Activated T-helper 1 cell treated with anti-CD3 and anti-CD28 coated beads, Interleukin-12 subunit alpha, Interleukin-12 subunit beta, Interleukin-2, Interleukin-4 antibody, amounts not matched to agents 30 ng/mL and 10 ng/mL and 1 ng/mL, durations not matched to agents 14 hours and 24 hours and 36 hours (primary cell): ENCODE measurements at regions of chr15 and their contacts with region 1.

Region 1: GRCh38 chr15:34331809-34332208 is 5.8 kb downstream of the SLC12A6 start:
- DNase-seq: no peak
- H3K4me3 Mint-ChIP-seq: peak overlapping the region; percentile 23
- H3K27ac Mint-ChIP-seq: peak overlapping the region; percentile 78
- H3K4me1 Mint-ChIP-seq: peaks cover 87% of the 10 kb centered on the region
- H3K27me3 Mint-ChIP-seq: no peaks in the 10 kb centered on the region

Region 2: GRCh38 chr15:33086507-33087121 is 1245.2 kb before region 1 on chr15:
- intact Hi-C with region 1: no loop called
- DNase-seq: no peak
- H3K4me3 Mint-ChIP-seq: no peak overlapping the region
- H3K27ac Mint-ChIP-seq: no peak overlapping the region
- H3K4me1 Mint-ChIP-seq: no peaks in the 10 kb centered on the region
- H3K27me3 Mint-ChIP-seq: peaks cover 4% of the 10 kb centered on the region

Region 3: GRCh38 chr15:34241372-34242330 is 90.2 kb before region 1 on chr15:
- intact Hi-C with region 1: loop called (anchors 1 kb)
- DNase-seq: no peak
- H3K4me3 Mint-ChIP-seq: no peak overlapping the region
- H3K27ac Mint-ChIP-seq: no peak overlapping the region
- H3K4me1 Mint-ChIP-seq: peaks cover 38% of the 10 kb centered on the region
- H3K27me3 Mint-ChIP-seq: no peaks in the 10 kb centered on the region

Region 4: GRCh38 chr15:34275154-34275553 is 56.7 kb before region 1 on chr15:
- intact Hi-C with region 1: loop called (anchors 5 kb)
- DNase-seq: no peak
- H3K4me3 Mint-ChIP-seq: no peak overlapping the region
- H3K27ac Mint-ChIP-seq: no peak overlapping the region
- H3K4me1 Mint-ChIP-seq: no peaks in the 10 kb centered on the region
- H3K27me3 Mint-ChIP-seq: no peaks in the 10 kb centered on the region

Region 5: DNA sequence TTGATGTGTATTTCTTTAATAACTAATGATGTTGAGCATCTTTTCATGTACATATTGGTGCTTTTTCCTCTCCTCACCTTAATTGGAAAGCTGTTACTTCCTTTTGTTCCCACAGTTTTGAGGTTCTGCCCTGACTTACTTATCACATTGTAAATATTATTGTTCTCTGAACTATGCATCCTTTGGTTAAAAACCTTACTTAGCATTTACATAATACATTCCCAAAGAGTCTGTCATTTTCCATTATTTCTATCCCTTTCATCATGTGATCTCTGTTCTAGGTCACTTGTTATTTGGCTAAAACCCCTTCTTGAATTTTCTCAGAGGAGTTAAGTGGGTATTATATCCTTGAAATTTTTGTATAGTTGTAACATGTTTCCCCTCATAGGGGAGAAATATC is 27.2 kb before region 1 on chr15:
- intact Hi-C with region 1: no loop called
- DNase-seq: no peak
- H3K4me3 Mint-ChIP-seq: no peak overlapping the region
- H3K27ac Mint-ChIP-seq: no peak overlapping the region
- H3K4me1 Mint-ChIP-seq: peaks cover 28% of the 10 kb centered on the region
- H3K27me3 Mint-ChIP-seq: no peaks in the 10 kb centered on the region

Region 6: GRCh38 chr15:34318277-34319079 is 13.3 kb before region 1 on chr15:
- intact Hi-C with region 1: loop called (anchors 1 kb)
- DNase-seq: no peak
- H3K4me3 Mint-ChIP-seq: peak overlapping the region; percentile 88
- H3K27ac Mint-ChIP-seq: peak overlapping the region; percentile 79
- H3K4me1 Mint-ChIP-seq: peaks cover 43% of the 10 kb centered on the region
- H3K27me3 Mint-ChIP-seq: no peaks in the 10 kb centered on the region

Region 7: GRCh38 chr15:34342737-34343575 is 11.1 kb after region 1 on chr15 and contains the starts of genes NOP10 and NUTM1:
- intact Hi-C with region 1: loop called (anchors 1 kb)
- DNase-seq: peak; percentile 91
- H3K4me3 Mint-ChIP-seq: no peak within 1 kb of the TSS
- H3K27ac Mint-ChIP-seq: peak within 1 kb of the TSS; percentile 88
- H3K4me1 Mint-ChIP-seq: peaks cover 26% of the 10 kb centered on the region
- H3K27me3 Mint-ChIP-seq: no peaks in the 10 kb centered on the region
- total RNA-seq, gene NOP10: 257 and 267 TPM in 2 replicates
- total RNA-seq, gene NUTM1: not detected in 2 replicates

Region 8: DNA sequence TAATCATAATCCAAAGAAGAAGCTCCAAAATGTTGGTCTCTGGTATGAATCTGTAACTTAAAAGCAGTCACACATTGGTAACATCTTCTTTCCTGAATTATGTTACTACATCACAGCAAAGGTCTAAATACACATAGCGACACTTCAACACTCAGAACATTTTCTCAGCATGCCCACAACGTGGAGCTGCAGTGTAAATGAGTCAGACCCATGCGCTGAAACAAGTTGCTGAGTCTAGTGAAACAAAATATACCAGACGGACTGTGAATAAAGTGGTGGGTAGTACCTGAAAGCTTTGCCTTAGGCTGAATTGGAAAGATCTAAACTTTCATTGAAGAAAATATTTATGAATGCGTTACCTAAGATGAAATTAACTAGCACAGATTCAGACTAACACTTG is 284.8 kb after region 1 on chr15:
- intact Hi-C with region 1: no loop called
- DNase-seq: no peak
- H3K4me3 Mint-ChIP-seq: no peak overlapping the region
- H3K27ac Mint-ChIP-seq: no peak overlapping the region
- H3K4me1 Mint-ChIP-seq: no peaks in the 10 kb centered on the region
- H3K27me3 Mint-ChIP-seq: peaks cover 52% of the 10 kb centered on the region

Region 9: GRCh38 chr15:34987985-34988873 is 656.4 kb after region 1 on chr15 and contains the start of gene ZNF770:
- intact Hi-C with region 1: loop called (anchors 5 kb)
- DNase-seq: peak; percentile 84
- H3K4me3 Mint-ChIP-seq: peak within 1 kb of the TSS; percentile 97
- H3K27ac Mint-ChIP-seq: peak within 1 kb of the TSS; percentile 96
- H3K4me1 Mint-ChIP-seq: peaks cover 44% of the 10 kb centered on the region
- H3K27me3 Mint-ChIP-seq: no peaks in the 10 kb centered on the region
- total RNA-seq, gene ZNF770: 50.1 and 50.6 TPM in 2 replicates